Aorta (tissue), 5 donors: ENCODE measurements at regions of chr1 and their contacts with region 1.

Region 1: DNA sequence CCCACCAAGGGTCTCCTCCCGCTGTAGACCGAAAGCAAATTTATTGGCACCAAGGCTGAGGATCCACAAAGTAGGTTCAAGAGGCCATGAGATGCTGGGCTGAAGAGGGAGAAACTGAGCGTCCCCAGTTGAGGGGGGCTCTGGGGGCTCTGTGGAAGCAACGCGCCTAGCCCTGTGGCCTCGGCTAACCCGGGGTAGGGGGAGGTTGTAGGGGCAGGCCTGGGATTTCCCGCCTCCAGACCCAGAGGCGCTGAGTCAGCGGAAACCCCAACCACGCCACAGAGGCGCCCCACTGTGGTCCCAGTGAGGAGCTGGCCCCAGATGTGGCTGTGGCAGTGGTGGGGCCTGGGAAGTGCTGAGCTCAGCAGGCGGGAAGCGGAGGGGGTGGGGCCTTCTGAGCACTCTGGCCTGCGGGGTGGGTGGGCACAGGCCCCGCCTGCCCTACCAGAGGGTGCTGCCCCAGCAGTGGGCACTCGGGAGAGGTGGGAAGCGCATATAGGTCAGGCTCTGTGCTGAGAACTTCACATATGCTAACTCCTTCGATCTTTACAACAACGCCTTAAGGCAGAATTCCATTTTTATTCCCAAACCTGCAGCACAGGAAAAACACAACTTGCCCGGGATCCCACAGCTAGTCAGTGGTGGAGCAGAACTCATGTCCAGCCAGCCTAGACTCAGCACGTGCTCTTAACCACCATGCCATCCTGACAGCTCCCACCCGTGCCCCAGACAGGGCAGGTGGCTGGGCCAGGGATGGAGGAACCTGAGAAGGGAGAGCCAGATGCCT is 1.5 kb upstream of the COL16A1 start:
- DNase-seq: peak; percentile 79 to 89
- ATAC-seq: peak; percentile 31
- H3K4me3 ChIP-seq: no peak overlapping the region
- H3K27ac ChIP-seq: peak overlapping the region in 1 of 2 donors; percentile 60
- H3K4me1 ChIP-seq: no peaks in the 10 kb centered on the region
- H3K27me3 ChIP-seq: no peaks in the 10 kb centered on the region

Region 2: DNA sequence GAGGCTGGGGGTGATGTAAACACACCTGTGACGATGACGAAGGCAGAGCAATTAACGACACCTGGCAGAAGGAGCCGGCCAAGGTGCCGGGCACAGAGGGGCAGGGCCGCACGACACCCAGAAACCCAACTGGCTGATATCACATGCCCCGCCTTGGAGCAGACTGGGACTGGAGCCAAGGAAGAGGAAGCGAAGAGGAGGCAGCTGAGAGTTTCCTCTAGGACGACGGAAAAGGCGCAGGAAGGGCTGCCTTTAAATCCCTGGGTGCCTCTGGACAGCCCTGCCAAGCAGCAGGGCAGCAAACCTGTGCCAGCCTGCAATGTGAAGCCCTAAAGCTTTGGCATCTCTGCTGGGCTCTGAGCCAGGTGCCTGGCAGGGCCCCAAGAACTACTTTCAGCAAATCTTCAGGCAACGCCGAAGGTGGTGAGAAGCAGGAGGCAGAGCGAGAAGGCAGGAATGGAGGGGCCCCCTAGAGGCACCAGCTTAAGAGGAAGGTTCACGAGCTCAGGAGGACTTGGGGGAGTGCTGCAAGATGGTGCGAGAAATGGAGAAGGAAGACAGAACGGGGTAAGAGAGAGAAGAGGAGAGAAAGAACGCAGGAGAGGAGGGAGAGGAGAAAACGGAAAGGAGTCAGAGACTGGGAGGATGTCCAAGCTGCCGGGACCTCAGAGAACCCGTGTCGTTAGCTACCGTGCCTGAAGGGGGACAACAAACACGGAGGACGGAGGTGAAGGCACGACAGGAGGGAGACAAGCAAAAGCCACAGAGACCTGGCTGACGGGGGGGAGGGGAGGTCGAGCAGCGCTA is 35.3 kb before region 1 on chr1:
- intact Hi-C with region 1: loop called in 1 of 2 experiments (anchors 2 kb)
- DNase-seq: peak; percentile 86 to 95
- ATAC-seq: peak; percentile 56
- H3K4me3 ChIP-seq: no peak overlapping the region
- H3K27ac ChIP-seq: peak overlapping the region in 1 of 2 donors; percentile 90
- H3K4me1 ChIP-seq: peaks cover 0 to 2% of the 10 kb centered on the region in 2 donors
- H3K27me3 ChIP-seq: no peaks in the 10 kb centered on the region

Region 3: DNA sequence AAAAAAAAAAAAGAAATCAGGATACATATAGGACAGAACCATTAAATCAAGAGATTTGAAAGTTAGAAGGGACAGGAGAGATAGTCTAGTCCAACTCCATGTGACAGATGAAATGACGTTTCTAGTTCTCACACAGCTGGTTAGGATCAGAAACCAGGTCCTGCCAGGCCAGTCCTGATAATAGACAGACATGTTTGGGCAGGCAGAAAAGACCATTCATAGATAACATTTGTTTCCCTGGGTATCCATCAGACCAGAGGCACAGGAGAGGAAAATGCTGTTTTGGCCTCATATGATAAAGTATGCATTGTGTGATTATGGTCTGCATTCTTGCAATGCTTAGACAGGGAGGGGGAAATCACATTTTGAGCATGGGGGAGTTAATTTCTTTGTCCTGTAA is 788.9 kb after region 1 on chr1:
- intact Hi-C with region 1: no loop called
- DNase-seq: no peak
- ATAC-seq: no peak
- H3K4me3 ChIP-seq: no peak overlapping the region
- H3K27ac ChIP-seq: no peak overlapping the region
- H3K4me1 ChIP-seq: no peaks in the 10 kb centered on the region
- H3K27me3 ChIP-seq: no peaks in the 10 kb centered on the region